H1 (cell line): ENCODE measurements at regions of chr1 and their contacts with region 1.

Region 1: GRCh38 chr1:156524481-156524869 is 23.9 kb upstream of the MEF2D start:
- DNase-seq: no peak
- H3K4me3 ChIP-seq: no peak overlapping the region
- H3K27ac ChIP-seq: no peak overlapping the region
- H3K4me1 ChIP-seq: peaks cover 3 to 15% (median 11%) of the 10 kb centered on the region in 4 experiments
- H3K27me3 ChIP-seq: no peaks in the 10 kb centered on the region
- CTCF ChIP-seq: no peak
- EP300 ChIP-seq: no peak
- POLR2A ChIP-seq: no peak
- RAD21 ChIP-seq: no peak

Region 2: GRCh38 chr1:156489166-156489934 is 35.1 kb before region 1 on chr1:
- CTCF ChIA-PET with region 1: interaction called, 14 read pairs
- POLR2A ChIA-PET with region 1: interaction called, 3 read pairs
- DNase-seq: no peak
- H3K4me3 ChIP-seq: peak overlapping the region in 1 of 4 experiments; percentile 51; a peak in 2 of 8 replicates
- H3K27ac ChIP-seq: no peak overlapping the region
- H3K4me1 ChIP-seq: peaks cover 9 to 44% (median 28%) of the 10 kb centered on the region in 4 experiments
- H3K27me3 ChIP-seq: no peaks in the 10 kb centered on the region
- CTCF ChIP-seq: peak in 2 of 3 experiments; percentile 26 to 32; a peak in 2 of 4 replicates
- EP300 ChIP-seq: no peak
- POLR2A ChIP-seq: no peak
- RAD21 ChIP-seq: peak; percentile 18 to 31; a peak in 1 of 4 replicates

Region 3: GRCh38 chr1:156510709-156511108 is 13.8 kb before region 1 on chr1:
- CTCF ChIA-PET with region 1: interaction called, 20 read pairs
- POLR2A ChIA-PET with region 1: interaction called, 10 read pairs
- DNase-seq: no peak
- H3K4me3 ChIP-seq: no peak overlapping the region
- H3K27ac ChIP-seq: no peak overlapping the region
- H3K4me1 ChIP-seq: peaks cover 0 to 11% (median 4%) of the 10 kb centered on the region in 4 experiments; a peak in 3 of 7 replicates
- H3K27me3 ChIP-seq: no peaks in the 10 kb centered on the region
- CTCF ChIP-seq: no peak
- EP300 ChIP-seq: no peak
- POLR2A ChIP-seq: no peak
- RAD21 ChIP-seq: no peak